Stomach (tissue), 19 donors: ENCODE measurements at regions of chr12 and their contacts with region 1.

Region 1: DNA sequence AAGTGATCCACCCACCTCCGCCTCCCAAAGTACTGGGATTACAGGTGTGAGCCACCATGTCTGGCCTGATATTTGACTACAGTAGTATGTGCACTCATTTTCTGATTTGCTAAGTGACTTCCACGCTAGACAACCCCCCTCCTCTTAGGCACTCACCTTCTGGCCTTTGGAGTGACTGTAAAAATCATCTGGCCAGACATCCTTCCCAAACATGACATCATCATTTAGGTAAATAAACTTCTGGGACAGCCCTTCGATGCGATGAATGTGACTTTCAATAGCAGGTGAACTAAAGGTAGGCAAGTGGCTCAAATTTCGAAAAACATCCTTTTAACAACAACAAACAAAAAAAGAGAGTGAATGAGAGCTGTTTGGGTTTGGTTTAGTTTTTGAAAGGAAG is 30.6 kb upstream of the SYCP3 start:
- DNase-seq: no peak
- H3K4me3 ChIP-seq: no peak overlapping the region
- H3K27ac ChIP-seq: no peak overlapping the region
- H3K4me1 ChIP-seq: peaks cover 0 to 20% (median 2%) of the 10 kb centered on the region in 4 donors
- H3K27me3 ChIP-seq: no peaks in the 10 kb centered on the region
- CTCF ChIP-seq: no peak
- EP300 ChIP-seq: no peak
- POLR2A ChIP-seq: no peak

Region 2: DNA sequence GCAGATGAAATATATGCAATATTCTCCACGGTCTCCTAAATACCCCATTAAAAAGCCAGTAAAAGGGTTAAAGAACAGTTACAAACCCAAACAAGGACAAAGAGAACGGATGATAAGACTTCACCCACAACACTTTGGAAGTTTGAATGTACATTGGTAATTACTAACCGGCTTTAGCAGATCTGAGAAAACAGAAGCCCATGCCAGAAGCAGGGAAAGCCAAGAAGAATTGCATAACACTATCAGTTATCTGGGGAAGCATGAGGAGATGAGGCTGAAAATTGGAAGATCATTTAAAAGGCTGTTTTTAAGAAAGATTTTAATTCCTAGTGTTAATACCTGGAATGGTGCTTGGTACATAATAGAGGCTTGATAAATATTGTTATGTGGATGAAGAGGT is 230.7 kb before region 1 on chr12:
- intact Hi-C with region 1: no loop called
- DNase-seq: no peak
- H3K4me3 ChIP-seq: no peak overlapping the region
- H3K27ac ChIP-seq: no peak overlapping the region
- H3K4me1 ChIP-seq: no peaks in the 10 kb centered on the region
- H3K27me3 ChIP-seq: no peaks in the 10 kb centered on the region
- CTCF ChIP-seq: no peak
- EP300 ChIP-seq: no peak
- POLR2A ChIP-seq: no peak

Region 3: GRCh38 chr12:101713059-101713682 is 56.7 kb before region 1 on chr12:
- intact Hi-C with region 1: no loop called
- DNase-seq: peak; percentile 41 to 47
- H3K4me3 ChIP-seq: no peak overlapping the region
- H3K27ac ChIP-seq: peak overlapping the region; percentile 23 to 68 (median 36)
- H3K4me1 ChIP-seq: peaks cover 11 to 66% (median 42%) of the 10 kb centered on the region in 4 donors
- H3K27me3 ChIP-seq: no peaks in the 10 kb centered on the region
- CTCF ChIP-seq: no peak
- EP300 ChIP-seq: no peak
- POLR2A ChIP-seq: no peak

Region 4: GRCh38 chr12:101830367-101831325 is 60.8 kb after region 1 on chr12 and contains the start of gene GNPTAB:
- intact Hi-C with region 1: loop called (anchors 5 kb)
- DNase-seq: peak; percentile 95 to 98
- H3K4me3 ChIP-seq: peak within 1 kb of the TSS; percentile 87 to 93 (median 89)
- H3K27ac ChIP-seq: peak within 1 kb of the TSS; percentile 83 to 90 (median 88)
- H3K4me1 ChIP-seq: peaks cover 20 to 47% (median 35%) of the 10 kb centered on the region in 4 donors
- H3K27me3 ChIP-seq: no peaks in the 10 kb centered on the region
- CTCF ChIP-seq: peak in 5 of 7 experiments; percentile 24 to 91 (median 80)
- EP300 ChIP-seq: no peak
- POLR2A ChIP-seq: no peak
- total RNA-seq, gene GNPTAB: 15.8 to 63.2 (median 42.0) TPM